Posterior cingulate gyrus (tissue), 11 donors: ENCODE measurements at regions of chr12 and their contacts with region 1.

Region 1: DNA sequence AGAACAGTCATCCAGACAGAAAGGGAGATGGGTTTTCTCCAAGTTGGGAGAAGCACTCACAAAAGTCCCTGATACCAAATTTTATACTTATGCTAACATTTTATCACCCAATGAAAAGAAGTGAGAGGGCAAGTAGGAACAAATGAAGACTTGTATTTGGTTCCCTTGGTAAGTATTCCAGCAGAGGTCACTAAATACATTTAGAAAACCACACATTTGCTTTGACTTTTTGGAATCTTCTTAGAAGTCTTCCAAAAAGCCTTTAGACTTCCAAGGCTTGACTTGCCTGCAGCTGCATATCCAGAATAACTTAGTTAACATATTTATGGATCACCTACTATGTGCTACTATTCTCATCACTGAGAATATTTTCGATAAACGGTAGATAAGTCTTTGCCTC is 3.1 kb upstream of the GYS2 start:
- DNase-seq: no peak

Region 2: DNA sequence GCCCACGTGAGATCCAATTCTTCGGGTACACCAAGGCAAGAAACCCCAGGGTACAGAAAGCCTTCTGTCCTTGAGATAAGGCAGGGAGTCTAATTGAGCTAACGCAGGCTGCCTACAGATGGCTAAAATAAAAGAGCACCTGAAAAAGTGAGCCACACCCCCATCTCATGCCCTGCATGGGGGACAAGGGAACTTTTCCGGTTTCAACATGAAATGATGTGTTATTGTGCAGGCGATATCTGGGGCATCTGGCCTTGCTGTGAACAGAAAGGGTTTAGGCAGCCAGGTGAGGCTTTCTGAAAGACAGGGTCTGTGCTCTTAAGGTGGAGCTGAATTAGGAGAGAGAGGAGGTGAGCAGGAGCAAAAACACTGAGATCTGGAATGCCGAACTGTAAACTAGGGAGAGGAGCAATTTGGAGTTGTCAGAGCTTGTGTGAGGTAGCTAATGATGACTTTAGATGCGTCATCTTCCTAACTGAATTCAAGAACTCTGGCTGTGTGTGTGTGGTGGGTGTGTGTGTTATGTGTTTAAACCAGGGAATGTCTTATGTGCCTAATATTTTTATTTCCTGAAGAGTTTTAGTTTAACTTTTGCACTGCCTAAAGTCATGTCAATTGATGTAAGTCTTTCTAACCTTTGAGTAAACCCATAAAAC is 70.0 kb after region 1 on chr12:
- intact Hi-C with region 1: loop called (anchors 1 kb)
- DNase-seq: no peak

Region 3: DNA sequence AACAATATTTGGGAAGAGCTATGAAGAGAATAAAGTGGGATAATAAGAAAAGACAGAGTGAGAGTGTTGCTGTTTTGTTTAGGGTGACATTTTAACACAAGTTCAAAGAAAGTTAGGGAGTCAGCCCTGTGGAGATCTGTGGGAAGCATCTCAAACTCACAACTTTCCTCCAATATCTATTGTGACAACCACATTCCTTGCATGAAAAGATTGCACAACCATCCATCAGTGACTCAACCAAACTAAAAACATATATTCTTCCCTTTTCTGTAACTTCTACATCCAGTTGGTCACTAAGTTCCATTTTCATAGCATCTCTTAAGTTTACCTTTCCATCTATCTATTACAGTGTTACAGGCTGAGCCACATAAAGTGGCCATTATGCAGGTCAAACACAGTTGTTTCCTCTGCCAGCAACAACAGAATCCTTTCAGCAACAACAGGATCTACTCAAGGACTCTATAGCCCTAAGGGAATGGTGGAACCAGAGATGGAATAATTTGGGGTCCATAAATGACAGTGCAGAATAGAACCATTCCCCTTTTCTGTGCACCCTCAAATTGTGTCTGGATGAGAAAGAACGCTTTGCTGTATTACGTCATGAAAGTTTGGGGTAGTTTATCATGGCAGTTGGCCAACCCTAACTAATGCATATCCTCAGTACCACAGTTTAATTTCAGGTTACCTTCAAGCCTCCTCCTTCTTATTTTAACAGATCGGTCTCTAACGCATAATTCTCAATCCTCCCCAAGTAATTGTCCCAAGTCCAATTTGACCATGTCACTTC is 608.0 kb after region 1 on chr12:
- intact Hi-C with region 1: no loop called
- DNase-seq: no peak